CD8-positive, alpha-beta memory T cell (primary cell): ENCODE measurements at regions of chr11 and their contacts with region 1.

Region 1: DNA sequence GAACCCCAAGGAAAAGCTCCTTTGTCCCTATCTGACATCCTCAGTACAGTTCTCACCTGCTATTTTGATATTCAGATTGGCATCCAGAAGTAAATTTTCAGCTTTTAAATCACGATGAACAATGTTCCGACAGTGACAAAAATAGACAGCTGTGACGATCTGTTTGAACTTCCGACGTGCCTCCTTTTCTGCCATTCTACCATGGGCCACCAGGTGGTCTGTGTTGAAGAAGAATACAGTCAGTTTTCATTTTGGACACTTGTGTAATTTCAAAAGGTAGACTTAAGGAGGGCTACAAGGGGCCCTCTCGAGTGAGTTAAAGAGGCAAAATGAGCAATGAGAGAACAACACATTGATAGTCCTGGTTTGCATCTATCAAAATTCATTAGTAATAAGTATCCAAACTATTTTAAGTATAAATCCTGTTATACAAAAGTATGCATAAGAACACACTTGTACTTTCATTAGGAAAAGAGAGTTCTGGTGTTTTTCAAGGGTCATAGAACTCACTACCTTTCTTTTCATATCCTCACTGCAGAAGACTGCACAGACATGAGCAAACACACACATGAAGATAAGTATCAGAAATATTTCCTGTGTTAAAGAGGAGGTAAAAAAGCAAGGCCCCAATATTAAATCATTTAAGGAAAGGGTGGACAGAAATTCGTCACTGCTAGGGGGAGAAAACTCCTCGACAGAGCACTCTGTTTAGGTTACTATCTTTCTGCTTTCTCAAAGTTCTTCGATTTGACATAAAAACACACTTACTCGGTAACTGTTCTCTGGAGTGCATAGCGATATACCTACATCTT is 89.9 kb upstream of the APOA1 start:
- DNase-seq: peak; percentile 8 to 70 (median 50)
- H3K4me3 ChIP-seq: peak overlapping the region; percentile 1
- H3K4me3 Mint-ChIP-seq: peak overlapping the region; percentile 17 to 94 (median 81)
- H3K27ac ChIP-seq: peak overlapping the region; percentile 46
- H3K27ac Mint-ChIP-seq: peak overlapping the region; percentile 92 to 100 (median 98)
- H3K4me1 ChIP-seq: peaks cover 84% of the 10 kb centered on the region
- H3K4me1 Mint-ChIP-seq: peaks cover 89 to 93% (median 92%) of the 10 kb centered on the region in 3 donors
- H3K27me3 ChIP-seq: no peaks in the 10 kb centered on the region
- H3K27me3 Mint-ChIP-seq: no peaks in the 10 kb centered on the region

Region 2: GRCh38 chr11:116813781-116814471 is 113.4 kb before region 1 on chr11:
- CTCF ChIA-PET with region 1: no interaction called
- POLR2A ChIA-PET with region 1: interaction called, 13 read pairs
- DNase-seq: no peak
- H3K4me3 ChIP-seq: no peak overlapping the region
- H3K4me3 Mint-ChIP-seq: no peak overlapping the region
- H3K27ac ChIP-seq: no peak overlapping the region
- H3K27ac Mint-ChIP-seq: peak overlapping the region in 1 of 8 donors; percentile 54
- H3K4me1 ChIP-seq: no peaks in the 10 kb centered on the region
- H3K4me1 Mint-ChIP-seq: no peaks in the 10 kb centered on the region
- H3K27me3 ChIP-seq: no peaks in the 10 kb centered on the region
- H3K27me3 Mint-ChIP-seq: peaks cover 1 to 3% of the 10 kb centered on the region in 2 donors

Region 3: GRCh38 chr11:116901211-116901610 is 26.2 kb before region 1 on chr11:
- CTCF ChIA-PET with region 1: no interaction called
- POLR2A ChIA-PET with region 1: no interaction called
- DNase-seq: no peak
- H3K4me3 ChIP-seq: no peak overlapping the region
- H3K4me3 Mint-ChIP-seq: no peak overlapping the region
- H3K27ac ChIP-seq: no peak overlapping the region
- H3K27ac Mint-ChIP-seq: peak overlapping the region in 3 of 8 donors; percentile 49 to 81 (median 69)
- H3K4me1 ChIP-seq: peaks cover 15% of the 10 kb centered on the region
- H3K4me1 Mint-ChIP-seq: peaks cover 37 to 44% (median 44%) of the 10 kb centered on the region in 3 donors
- H3K27me3 ChIP-seq: no peaks in the 10 kb centered on the region
- H3K27me3 Mint-ChIP-seq: peaks cover 0 to 2% of the 10 kb centered on the region in 2 donors

Region 4: DNA sequence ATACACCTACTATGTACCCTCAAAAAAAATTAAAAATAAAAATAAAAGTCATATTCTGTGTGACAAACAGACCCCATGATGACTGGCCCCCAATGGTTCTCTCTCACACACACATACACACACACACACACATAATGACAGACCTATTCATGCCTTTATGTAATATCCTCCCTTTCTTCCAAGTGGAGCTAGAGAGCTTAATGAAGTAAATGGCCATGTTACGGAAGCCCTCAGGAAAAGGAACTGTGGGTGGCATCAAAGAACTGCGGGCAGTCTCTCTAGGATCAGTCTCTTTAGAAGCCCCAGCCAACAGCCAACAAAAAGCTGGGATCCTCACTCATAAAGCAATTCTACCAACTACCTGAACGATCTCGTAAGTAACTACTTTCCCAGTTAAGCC is 45.3 kb after region 1 on chr11:
- CTCF ChIA-PET with region 1: no interaction called
- POLR2A ChIA-PET with region 1: no interaction called
- DNase-seq: no peak
- H3K4me3 ChIP-seq: no peak overlapping the region
- H3K4me3 Mint-ChIP-seq: no peak overlapping the region
- H3K27ac ChIP-seq: no peak overlapping the region
- H3K27ac Mint-ChIP-seq: peak overlapping the region in 3 of 8 donors; percentile 48 to 56 (median 50)
- H3K4me1 ChIP-seq: no peaks in the 10 kb centered on the region
- H3K4me1 Mint-ChIP-seq: peaks cover 51 to 76% (median 57%) of the 10 kb centered on the region in 3 donors
- H3K27me3 ChIP-seq: no peaks in the 10 kb centered on the region
- H3K27me3 Mint-ChIP-seq: no peaks in the 10 kb centered on the region